Activated CD8-positive, alpha-beta T cell treated with anti-CD3 and anti-CD28 coated beads for 36 hours (primary cell): ENCODE measurements at regions of chr4 and their contacts with region 1.

Region 1: DNA sequence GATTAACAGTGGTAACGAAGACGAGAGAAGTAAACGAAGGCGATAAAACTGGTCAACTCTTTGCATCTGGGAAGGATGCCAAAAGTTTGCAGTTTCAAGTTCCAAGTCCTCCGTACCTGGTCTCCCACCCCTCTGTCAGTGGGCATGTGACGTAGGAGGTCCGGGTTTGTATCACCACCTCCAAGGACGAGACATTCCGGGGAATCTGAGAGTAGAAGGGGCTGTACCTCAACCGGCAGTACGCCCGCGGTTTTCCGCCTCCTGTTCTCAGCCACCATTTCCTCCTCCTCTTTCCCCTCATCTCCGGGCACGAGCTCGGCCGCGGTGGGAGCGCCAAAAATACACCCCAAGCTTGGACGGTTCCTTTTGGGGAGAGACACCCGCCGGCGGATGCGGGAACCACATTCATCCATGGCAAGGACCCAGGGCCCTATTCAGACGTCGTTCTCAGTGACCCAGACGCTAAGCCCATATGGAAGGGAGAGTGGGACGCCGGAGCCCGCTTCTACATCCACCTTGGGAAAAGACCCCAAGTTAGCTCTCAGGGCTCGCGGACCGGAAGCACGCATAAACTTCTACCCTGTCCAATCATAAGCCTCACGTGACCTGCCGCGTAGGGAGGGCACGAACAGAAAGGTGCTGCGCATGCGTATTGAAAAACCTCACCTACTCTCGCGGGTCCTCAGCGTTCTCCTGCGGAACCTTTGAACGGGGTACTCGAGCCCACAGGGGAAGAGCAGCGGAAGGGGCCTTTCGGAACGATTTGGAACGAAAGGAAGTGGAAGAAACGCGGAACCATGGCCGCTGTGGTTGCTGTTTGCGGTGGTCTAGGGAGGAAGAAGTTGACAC is at the starts of genes HELQ and MRPS18C:
- DNase-seq: peak; percentile 99
- ATAC-seq: peak; percentile 93
- H3K4me3 Mint-ChIP-seq: peak within 1 kb of the TSS; percentile 100
- H3K27ac Mint-ChIP-seq: peak within 1 kb of the TSS; percentile 100
- H3K4me1 Mint-ChIP-seq: peaks cover 47% of the 10 kb centered on the region
- H3K27me3 Mint-ChIP-seq: no peaks in the 10 kb centered on the region
- CTCF ChIP-seq: no peak
- total RNA-seq, gene HELQ: 9.3 to 10.4 TPM
- total RNA-seq, gene MRPS18C: 62.7 to 64.0 TPM

Region 2: DNA sequence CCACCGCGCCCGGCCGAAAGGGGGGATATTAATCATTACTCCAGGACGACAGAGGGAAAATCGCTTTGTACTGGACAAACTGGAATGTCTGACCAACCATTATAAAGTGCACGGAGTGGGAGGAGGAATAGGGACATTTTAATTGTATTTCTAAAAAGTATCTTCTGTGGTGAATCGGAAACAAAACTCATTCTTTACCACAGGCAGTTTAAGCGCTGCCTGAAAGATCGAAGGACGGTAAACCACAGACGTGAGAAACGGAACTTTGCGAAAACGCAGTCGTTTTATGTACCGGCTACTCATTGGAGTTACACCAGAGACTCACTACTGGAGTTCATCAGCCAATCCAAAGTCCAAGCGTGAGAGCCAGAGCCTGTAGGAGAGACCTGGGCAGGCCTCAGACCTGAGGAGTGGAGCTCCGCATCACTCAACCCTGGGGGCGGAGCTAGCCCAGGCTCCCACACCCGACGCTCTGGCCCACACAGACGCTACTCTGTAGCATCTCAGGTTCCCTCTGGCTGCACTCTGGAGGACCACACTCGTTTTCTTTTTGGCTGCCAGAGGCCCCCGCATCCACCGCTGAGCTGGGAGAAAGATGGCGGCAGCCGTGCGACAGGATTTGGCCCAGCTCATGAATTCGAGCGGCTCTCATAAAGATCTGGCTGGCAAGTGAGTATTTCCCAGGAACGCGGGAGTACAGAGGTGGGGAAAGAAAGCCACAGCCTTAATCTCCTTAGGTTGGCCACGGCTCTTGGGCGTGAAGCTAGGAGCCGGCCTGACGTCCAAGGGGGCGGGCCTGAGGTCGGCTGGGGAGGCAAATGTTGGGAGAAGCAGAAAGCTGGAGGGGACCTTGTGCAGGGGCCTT is 420.6 kb before region 1 on chr4 and contains the start of gene COPS4:
- CTCF ChIA-PET with region 1: no interaction called
- POLR2A ChIA-PET with region 1: interaction called, 3 read pairs
- intact Hi-C with region 1: loop called (anchors 10 kb)
- DNase-seq: peak; percentile 98
- ATAC-seq: peak; percentile 99
- H3K4me3 Mint-ChIP-seq: peak within 1 kb of the TSS; percentile 95
- H3K27ac Mint-ChIP-seq: peak within 1 kb of the TSS; percentile 100
- H3K4me1 Mint-ChIP-seq: peaks cover 26% of the 10 kb centered on the region
- H3K27me3 Mint-ChIP-seq: no peaks in the 10 kb centered on the region
- CTCF ChIP-seq: no peak
- total RNA-seq, gene COPS4: 38.4 to 38.8 TPM

Region 3: DNA sequence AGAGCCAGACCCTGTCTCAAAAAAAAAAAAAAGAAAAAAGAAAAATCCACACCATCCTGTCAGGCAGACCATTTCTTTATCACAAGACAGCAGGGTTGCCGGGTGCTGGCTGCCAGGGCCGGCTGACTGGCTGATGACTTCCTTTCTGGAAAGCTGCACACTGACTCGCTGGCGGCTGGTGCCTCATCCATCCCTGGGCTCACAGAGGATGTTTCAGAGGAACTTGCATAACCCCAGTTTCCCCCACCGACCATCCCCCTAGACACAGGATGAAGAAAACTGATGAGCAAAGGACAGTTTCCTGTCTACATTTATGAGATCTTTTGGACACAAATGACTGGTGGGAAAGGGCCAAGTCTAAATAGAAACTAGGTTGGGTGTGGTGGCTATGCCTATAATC is 135.0 kb before region 1 on chr4:
- CTCF ChIA-PET with region 1: no interaction called
- POLR2A ChIA-PET with region 1: no interaction called
- intact Hi-C with region 1: no loop called
- DNase-seq: peak; percentile 59
- ATAC-seq: peak; percentile 70
- H3K4me3 Mint-ChIP-seq: no peak overlapping the region
- H3K27ac Mint-ChIP-seq: peak overlapping the region; percentile 17
- H3K4me1 Mint-ChIP-seq: peaks cover 6% of the 10 kb centered on the region
- H3K27me3 Mint-ChIP-seq: no peaks in the 10 kb centered on the region
- CTCF ChIP-seq: no peak

Region 4: GRCh38 chr4:83356899-83357661 is 98.4 kb before region 1 on chr4:
- CTCF ChIA-PET with region 1: interaction called, 3 read pairs
- POLR2A ChIA-PET with region 1: no interaction called
- intact Hi-C with region 1: loop called (anchors 5 kb)
- DNase-seq: peak; percentile 23
- ATAC-seq: peak; percentile 91
- H3K4me3 Mint-ChIP-seq: no peak overlapping the region
- H3K27ac Mint-ChIP-seq: peak overlapping the region; percentile 78
- H3K4me1 Mint-ChIP-seq: peaks cover 22% of the 10 kb centered on the region
- H3K27me3 Mint-ChIP-seq: no peaks in the 10 kb centered on the region
- CTCF ChIP-seq: no peak